ENCODE measurements at regions of chr14 and their contacts with region 1.

Region 1: GRCh38 chr14:98210045-98210672 is 1061.8 kb downstream of the BCL11B start:
- DNase-seq: no peak
- H3K4me3 ChIP-seq: no peak overlapping the region
- CTCF ChIP-seq: no peak
- POLR2A ChIP-seq: no peak

Region 2: GRCh38 chr14:98167705-98168104 is 42.5 kb before region 1 on chr14:
- intact Hi-C with region 1: loop called (anchors 1 kb)
- DNase-seq: no peak
- H3K4me3 ChIP-seq: no peak overlapping the region
- CTCF ChIP-seq: no peak
- POLR2A ChIP-seq: no peak